ENCODE measurements at regions of chr14 and their contacts with region 1.

Region 1: DNA sequence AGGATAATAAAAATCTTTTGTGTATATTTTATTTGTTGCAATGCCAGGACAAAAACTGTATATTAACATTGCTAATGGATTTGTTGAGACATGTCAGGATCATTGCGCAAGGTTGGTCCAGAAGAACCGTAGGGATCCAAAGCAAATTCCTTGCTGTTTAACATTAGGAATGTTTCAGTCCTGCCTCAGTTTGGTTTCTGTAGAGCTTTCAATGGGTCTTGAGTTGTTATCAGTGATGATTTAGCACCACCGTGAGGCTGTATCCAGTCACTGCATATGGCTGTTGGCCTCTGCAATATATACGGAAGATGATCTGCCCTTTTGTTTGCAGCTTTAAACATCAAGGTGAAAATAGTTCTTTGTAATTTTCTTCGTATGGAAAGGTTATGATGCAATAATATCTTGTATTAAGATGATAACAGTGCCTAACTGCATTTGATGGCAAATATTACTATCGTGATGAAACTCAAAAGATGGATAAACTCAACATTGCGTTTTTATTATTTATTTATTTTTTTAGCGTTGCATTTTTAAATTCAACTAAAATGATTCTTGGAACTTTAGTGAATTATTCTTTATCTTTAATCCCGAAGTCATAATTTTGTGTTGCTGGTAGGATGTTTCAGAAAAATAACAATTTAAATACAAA is 231.2 kb downstream of the AKAP6 start:
- DNase-seq: peak; percentile 53 to 80
- ATAC-seq: peak; percentile 88 to 90
- H3K4me3 ChIP-seq: no peak overlapping the region
- H3K27ac ChIP-seq: peak overlapping the region; percentile 27 to 40; a peak in 2 of 6 replicates
- H3K4me1 ChIP-seq: peaks cover 13% of the 10 kb centered on the region
- CTCF ChIP-seq: peak; percentile 88
- EP300 ChIP-seq: no peak
- POLR2A ChIP-seq: no peak
- RAD21 ChIP-seq: peak; percentile 85 to 93

Region 2: GRCh38 chr14:32545506-32546210 is 14.7 kb before region 1 on chr14:
- CTCF ChIA-PET with region 1: interaction called, 26 read pairs
- POLR2A ChIA-PET with region 1: no interaction called
- DNase-seq: no peak
- ATAC-seq: no peak
- H3K4me3 ChIP-seq: no peak overlapping the region
- H3K27ac ChIP-seq: no peak overlapping the region
- H3K4me1 ChIP-seq: no peaks in the 10 kb centered on the region; the same call in 2 of the 3 replicates
- CTCF ChIP-seq: no peak
- EP300 ChIP-seq: no peak
- POLR2A ChIP-seq: no peak
- RAD21 ChIP-seq: no peak

Region 3: DNA sequence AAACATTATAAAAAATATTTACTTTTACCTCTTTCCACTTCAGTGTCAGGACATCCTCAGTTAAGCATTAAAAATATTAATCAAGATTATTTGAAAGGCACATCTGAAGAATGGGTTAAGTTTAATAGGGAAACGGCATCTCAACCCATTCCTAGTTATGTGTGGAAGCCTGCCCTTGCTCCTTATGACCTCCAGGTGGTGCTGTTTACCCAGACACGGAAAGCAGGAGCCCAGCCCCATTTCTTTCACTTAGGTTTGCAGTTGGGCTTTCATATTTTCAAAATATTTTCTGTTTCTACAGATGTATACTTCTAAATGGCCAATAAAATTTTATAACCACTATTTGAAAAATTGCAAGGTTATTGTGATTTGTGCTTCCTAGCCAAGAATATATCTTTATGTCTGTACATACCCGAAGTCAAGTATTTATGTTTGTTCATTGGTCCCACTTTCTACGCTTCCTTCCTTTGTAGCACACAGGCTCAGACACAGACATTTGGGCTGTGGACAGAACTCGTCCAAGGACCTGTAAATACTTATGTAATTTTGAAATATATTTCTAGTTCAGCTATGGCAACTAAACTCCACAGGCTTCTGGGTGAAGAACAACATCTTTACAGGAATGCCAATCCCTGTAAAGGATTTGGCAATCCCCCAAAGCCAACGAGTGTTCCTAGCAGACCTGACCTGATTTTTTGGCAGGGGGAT is 15.9 kb after region 1 on chr14:
- CTCF ChIA-PET with region 1: interaction called, 16 read pairs
- POLR2A ChIA-PET with region 1: no interaction called
- DNase-seq: peak; percentile 33 to 55
- ATAC-seq: peak; percentile 85 to 91; a peak in 5 of 6 replicates
- H3K4me3 ChIP-seq: no peak overlapping the region
- H3K27ac ChIP-seq: no peak overlapping the region
- H3K4me1 ChIP-seq: no peaks in the 10 kb centered on the region
- CTCF ChIP-seq: peak; percentile 93
- EP300 ChIP-seq: no peak
- POLR2A ChIP-seq: no peak
- RAD21 ChIP-seq: peak; percentile 93 to 95

Region 4: GRCh38 chr14:32611752-32612151 is 51.4 kb after region 1 on chr14:
- CTCF ChIA-PET with region 1: no interaction called
- POLR2A ChIA-PET with region 1: no interaction called
- DNase-seq: no peak
- ATAC-seq: no peak
- H3K4me3 ChIP-seq: no peak overlapping the region
- H3K27ac ChIP-seq: no peak overlapping the region
- H3K4me1 ChIP-seq: no peaks in the 10 kb centered on the region
- CTCF ChIP-seq: no peak
- EP300 ChIP-seq: no peak
- POLR2A ChIP-seq: no peak
- RAD21 ChIP-seq: no peak

Measured in A549 (cell line).